A673 (cell line): ENCODE measurements at regions of chr5 and their contacts with region 1.

Region 1: DNA sequence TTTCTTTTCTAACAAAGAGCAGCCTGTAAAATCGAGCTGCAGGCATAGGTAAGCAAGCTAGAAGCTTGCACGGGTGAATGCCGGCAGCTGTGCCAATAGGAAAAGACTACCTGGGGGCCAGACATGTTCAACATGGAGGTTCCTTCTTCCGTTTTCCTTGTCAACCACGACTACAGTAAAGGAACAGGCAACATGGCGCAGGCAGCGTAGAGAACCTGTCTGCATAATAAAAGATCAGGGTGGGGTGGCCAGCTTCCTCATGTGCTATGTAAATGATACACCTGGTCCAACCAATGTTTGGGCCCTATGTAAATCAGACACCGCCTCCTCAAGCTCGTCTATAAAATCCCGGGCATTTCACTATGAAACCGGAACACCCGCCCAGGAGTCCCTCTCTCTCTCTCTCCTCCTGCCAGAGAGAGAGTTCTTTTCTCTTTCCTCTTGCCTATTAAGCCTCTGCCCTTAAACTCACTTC is 103.8 kb upstream of the LIFR start:
- DNase-seq: peak; percentile 94
- H3K4me3 ChIP-seq: peak overlapping the region; percentile 34
- H3K27ac ChIP-seq: peak overlapping the region; percentile 72
- H3K4me1 ChIP-seq: peaks cover 5% of the 10 kb centered on the region
- H3K27me3 ChIP-seq: no peaks in the 10 kb centered on the region
- CTCF ChIP-seq: no peak

Region 2: DNA sequence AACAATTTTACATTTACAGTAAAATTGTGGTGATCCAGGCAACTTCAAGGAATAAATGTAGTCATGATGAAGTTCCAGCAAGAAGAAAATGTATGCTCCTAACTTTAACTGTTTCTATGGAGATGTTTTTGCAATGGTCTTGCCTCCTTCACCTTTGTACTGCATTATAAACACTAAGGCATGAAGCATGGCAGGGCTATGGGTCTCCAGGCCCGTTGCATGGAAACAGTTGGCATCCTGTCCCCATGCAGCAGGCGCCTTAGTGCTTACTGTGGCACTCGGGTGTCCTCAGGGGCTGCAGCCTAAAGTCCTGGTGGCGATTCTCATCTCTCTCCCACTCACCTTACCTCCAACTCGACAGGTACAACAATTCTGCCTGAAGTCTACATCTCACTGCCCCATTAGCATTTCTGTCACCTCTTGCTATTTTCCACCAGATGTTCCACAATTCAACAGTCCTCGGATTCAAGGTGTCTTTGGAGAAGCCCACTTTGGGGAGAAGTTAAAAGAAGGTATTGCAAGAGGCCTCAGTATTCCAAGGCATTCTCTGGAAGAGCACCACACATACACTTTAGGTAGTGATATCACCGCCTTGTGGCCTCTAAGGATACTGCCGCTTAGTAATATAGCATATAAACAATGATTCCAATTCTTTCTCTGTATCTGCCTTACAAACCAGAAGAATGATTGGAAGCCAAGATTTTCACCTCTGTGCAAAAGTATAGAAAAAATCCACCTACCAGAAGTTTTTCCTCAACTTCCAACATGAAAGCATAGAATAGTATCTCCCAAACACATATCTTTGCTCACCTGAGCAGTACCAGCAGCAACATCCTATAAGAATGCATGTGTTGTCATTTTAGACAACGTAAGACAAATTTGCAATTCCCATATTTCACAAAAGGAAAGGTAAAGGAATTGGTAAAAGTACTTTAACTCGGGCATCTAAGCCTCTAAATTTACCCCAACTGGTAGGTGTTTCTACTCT is 108.9 kb before region 1 on chr5:
- CTCF ChIA-PET with region 1: no interaction called
- POLR2A ChIA-PET with region 1: no interaction called
- intact Hi-C with region 1: loop called (anchors 5 kb)
- DNase-seq: peak; percentile 73
- H3K4me3 ChIP-seq: no peak overlapping the region
- H3K27ac ChIP-seq: no peak overlapping the region
- H3K4me1 ChIP-seq: peaks cover 21% of the 10 kb centered on the region
- H3K27me3 ChIP-seq: no peaks in the 10 kb centered on the region
- CTCF ChIP-seq: peak; percentile 76

Region 3: GRCh38 chr5:38695021-38695958 is 35.1 kb after region 1 on chr5:
- CTCF ChIA-PET with region 1: no interaction called
- POLR2A ChIA-PET with region 1: no interaction called
- intact Hi-C with region 1: no loop called
- DNase-seq: no peak
- H3K4me3 ChIP-seq: no peak overlapping the region
- H3K27ac ChIP-seq: no peak overlapping the region
- H3K4me1 ChIP-seq: peaks cover 3% of the 10 kb centered on the region
- H3K27me3 ChIP-seq: no peaks in the 10 kb centered on the region
- CTCF ChIP-seq: no peak

Region 4: DNA sequence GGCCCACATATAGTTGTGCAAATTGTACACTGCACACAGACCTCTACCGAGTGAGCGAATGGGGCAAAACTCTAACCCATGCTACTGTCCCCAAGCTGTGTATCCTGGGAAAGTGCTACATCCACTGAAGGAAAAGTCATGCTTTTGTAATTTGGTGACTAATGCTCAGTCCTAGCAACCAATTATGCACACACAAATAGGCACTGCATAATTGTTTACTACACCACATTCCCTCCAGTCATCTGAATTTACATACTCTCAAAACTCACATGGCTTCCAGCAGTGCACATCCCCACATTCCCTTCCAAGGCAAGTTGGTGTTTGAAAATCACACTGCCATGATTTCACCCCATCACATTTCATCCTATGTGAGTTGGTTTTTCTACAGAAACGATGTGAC is 59.7 kb after region 1 on chr5:
- CTCF ChIA-PET with region 1: no interaction called
- POLR2A ChIA-PET with region 1: no interaction called
- intact Hi-C with region 1: loop called (anchors 1 kb)
- DNase-seq: peak; percentile 90
- H3K4me3 ChIP-seq: peak overlapping the region; percentile 11
- H3K27ac ChIP-seq: peak overlapping the region; percentile 90
- H3K4me1 ChIP-seq: peaks cover 87% of the 10 kb centered on the region
- H3K27me3 ChIP-seq: no peaks in the 10 kb centered on the region
- CTCF ChIP-seq: no peak

Region 5: DNA sequence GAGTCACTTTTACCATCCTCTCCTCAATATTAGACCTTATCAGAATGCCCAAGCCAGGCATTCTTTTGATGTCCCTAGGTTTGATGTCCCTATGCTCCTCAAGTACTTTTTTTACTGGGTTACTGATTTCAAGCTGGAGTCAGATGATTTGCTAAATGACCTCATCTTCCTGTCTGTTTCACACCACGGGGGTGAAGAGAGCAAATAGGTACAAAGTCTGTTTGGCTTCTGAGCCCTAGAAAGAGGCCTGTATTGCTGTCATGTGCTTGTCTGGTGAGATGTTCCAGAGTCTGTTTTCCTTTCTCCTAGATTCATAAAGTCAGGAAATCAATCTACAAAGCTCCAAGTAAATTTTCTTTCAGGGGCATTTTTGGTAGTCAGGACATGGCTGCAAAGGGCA is 777.2 kb after region 1 on chr5:
- CTCF ChIA-PET with region 1: no interaction called
- POLR2A ChIA-PET with region 1: no interaction called
- intact Hi-C with region 1: no loop called
- DNase-seq: no peak
- H3K4me3 ChIP-seq: no peak overlapping the region
- H3K27ac ChIP-seq: no peak overlapping the region
- H3K4me1 ChIP-seq: no peaks in the 10 kb centered on the region
- H3K27me3 ChIP-seq: no peaks in the 10 kb centered on the region
- CTCF ChIP-seq: no peak